Transverse colon (tissue), 4 donors: ENCODE measurements at regions of chr2 and their contacts with region 1.

Region 1: DNA sequence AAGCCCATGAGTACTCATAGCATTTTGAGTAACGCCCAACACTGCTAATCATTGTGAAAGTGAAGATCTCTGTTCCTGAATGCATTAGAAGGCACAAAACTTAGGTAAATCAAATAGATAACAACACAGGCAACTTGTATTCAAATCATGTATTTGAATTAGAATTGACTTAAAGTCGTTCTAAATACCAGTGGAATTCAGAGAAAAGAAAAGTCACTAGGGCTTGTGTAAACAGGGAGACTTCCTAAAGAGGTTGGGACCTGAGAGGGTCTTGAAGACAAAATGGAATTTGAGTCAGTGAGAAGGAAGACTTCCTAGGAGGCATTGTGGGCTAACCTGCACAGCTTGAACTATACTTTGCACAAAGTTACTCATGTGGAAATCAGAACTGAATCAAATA is 127.2 kb downstream of the CTNNA2 start:
- DNase-seq: no peak
- H3K4me3 ChIP-seq: no peak overlapping the region
- H3K27ac ChIP-seq: no peak overlapping the region
- H3K4me1 ChIP-seq: no peaks in the 10 kb centered on the region
- H3K27me3 ChIP-seq: no peaks in the 10 kb centered on the region
- CTCF ChIP-seq: no peak
- EP300 ChIP-seq: no peak
- POLR2A ChIP-seq: no peak

Region 2: GRCh38 chr2:79596403-79596802 is 43.6 kb before region 1 on chr2:
- in situ Hi-C with region 1: no loop called
- intact Hi-C with region 1: loop called (anchors 1 kb)
- DNase-seq: no peak
- H3K4me3 ChIP-seq: no peak overlapping the region
- H3K27ac ChIP-seq: no peak overlapping the region
- H3K4me1 ChIP-seq: no peaks in the 10 kb centered on the region
- H3K27me3 ChIP-seq: no peaks in the 10 kb centered on the region
- CTCF ChIP-seq: no peak
- EP300 ChIP-seq: no peak
- POLR2A ChIP-seq: no peak